ENCODE measurements at regions of chr3 and their contacts with region 1.

Region 1: DNA sequence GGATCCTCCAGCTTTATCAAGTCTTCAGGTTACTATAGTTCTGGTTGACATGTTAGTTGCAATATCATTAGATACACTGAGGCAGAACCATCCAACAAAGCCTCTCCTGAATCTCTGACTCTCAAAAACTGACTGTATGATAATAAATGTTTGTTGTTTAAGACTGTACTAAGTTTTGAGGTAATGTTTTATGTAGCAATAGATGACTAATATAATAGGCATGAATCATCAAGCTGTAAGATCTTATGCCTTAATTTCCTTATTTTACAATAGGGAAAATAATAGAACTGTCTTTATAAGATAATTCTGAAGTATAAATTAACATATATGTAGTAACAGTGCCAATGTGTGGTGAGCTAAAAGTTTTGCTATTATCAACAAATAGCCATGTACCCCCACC is 88.9 kb upstream of the TBC1D5 start:
- DNase-seq: no peak
- H3K4me3 Mint-ChIP-seq: no peak overlapping the region
- H3K27ac Mint-ChIP-seq: no peak overlapping the region
- H3K4me1 Mint-ChIP-seq: peaks cover 7% of the 10 kb centered on the region
- H3K27me3 Mint-ChIP-seq: no peaks in the 10 kb centered on the region
- CTCF ChIP-seq: no peak

Region 2: GRCh38 chr3:17686613-17687012 is 144.8 kb before region 1 on chr3:
- CTCF ChIA-PET with region 1: no interaction called
- intact Hi-C with region 1: loop called (anchors 5 kb)
- DNase-seq: no peak
- H3K4me3 Mint-ChIP-seq: no peak overlapping the region
- H3K27ac Mint-ChIP-seq: no peak overlapping the region
- H3K4me1 Mint-ChIP-seq: no peaks in the 10 kb centered on the region
- H3K27me3 Mint-ChIP-seq: no peaks in the 10 kb centered on the region
- CTCF ChIP-seq: no peak

Region 3: GRCh38 chr3:17747174-17747889 is 84.0 kb before region 1 on chr3:
- CTCF ChIA-PET with region 1: no interaction called
- intact Hi-C with region 1: loop called (anchors 5 kb)
- DNase-seq: no peak
- H3K4me3 Mint-ChIP-seq: no peak overlapping the region
- H3K27ac Mint-ChIP-seq: no peak overlapping the region
- H3K4me1 Mint-ChIP-seq: peaks cover 14% of the 10 kb centered on the region
- H3K27me3 Mint-ChIP-seq: no peaks in the 10 kb centered on the region
- CTCF ChIP-seq: no peak

Region 4: DNA sequence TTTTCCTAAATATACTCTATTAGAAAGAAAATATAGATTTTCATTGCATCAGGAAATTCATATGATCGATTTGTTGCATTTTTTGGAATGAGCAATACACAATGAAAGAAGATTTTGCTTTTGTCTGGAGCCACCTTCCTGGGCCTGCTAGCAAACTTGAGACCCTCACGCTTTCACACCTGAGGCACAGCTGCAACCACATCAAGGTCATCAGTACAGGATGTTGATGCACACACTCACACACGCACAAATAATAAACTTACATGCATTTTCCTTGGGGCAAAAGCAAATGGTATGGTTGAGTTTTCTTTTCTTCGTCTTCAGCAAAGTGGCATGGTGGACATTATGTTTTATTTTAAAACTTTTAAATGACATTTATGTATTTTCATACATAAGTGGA is 658.6 kb after region 1 on chr3:
- CTCF ChIA-PET with region 1: no interaction called
- intact Hi-C with region 1: no loop called
- DNase-seq: no peak
- H3K4me3 Mint-ChIP-seq: no peak overlapping the region
- H3K27ac Mint-ChIP-seq: no peak overlapping the region
- H3K4me1 Mint-ChIP-seq: no peaks in the 10 kb centered on the region
- H3K27me3 Mint-ChIP-seq: no peaks in the 10 kb centered on the region
- CTCF ChIP-seq: no peak